IMR-90 (cell line): ENCODE measurements at regions of chr3 and their contacts with region 1.

Region 1: DNA sequence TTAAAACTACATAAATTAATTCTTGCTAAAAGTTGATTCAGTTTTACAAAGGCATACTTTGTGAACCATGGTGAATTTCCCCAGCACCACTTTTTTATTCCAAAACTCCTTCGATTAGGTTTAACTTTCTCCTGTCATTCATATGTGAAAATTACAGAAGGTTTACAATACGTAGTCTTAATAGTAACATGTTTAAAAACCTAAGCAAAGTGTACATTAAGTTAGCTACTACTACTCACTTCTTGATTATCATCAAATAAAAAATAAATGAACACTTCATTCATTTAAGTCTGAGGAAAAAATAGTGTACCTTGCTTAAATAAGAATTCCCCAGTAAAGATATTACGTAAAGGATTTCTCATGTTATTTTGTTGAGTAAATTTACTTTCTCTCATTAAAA is 38.6 kb downstream of the DCUN1D1 start:
- DNase-seq: no peak
- ATAC-seq: no peak
- H3K4me3 ChIP-seq: no peak overlapping the region
- H3K27ac ChIP-seq: no peak overlapping the region
- H3K4me1 ChIP-seq: no peaks in the 10 kb centered on the region
- H3K27me3 ChIP-seq: no peaks in the 10 kb centered on the region
- CTCF ChIP-seq: no peak
- POLR2A ChIP-seq: no peak
- RAD21 ChIP-seq: no peak

Region 2: DNA sequence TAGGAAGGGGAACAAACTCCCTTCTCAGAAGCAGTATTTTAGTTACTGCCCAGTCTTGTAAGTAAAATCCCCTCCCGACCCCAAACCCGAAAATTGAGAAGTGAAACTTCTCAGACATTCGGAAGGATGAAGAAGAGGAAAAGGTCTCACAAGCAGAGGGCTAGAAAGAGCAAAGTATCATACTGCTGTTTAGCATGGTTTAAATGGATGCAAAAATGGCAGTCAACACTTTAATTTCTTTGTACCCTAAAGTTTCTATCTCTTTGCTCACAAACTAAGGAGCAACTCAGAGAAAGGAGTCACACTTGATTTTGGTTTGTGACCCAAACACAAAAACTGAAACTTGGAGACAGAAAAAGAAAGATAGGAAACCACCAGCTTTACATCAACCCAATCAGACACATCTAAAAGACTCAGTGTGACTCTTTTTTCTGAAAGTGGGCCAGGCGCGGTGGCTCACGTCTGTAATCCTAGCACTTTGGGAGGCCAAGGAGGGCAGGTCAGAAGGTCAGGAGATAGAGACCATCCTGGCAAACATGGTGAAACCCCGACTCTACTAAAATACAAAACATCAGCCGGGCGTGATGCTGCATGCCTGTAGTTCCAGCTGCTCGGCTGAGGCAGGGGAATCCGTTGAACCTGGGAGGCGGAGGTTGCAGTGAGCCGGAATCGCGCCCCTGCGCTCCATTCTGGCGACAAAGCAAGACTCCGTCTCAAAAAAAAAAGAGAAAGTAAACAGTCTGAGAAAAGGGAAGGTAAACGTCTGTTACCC is 211.6 kb before region 1 on chr3:
- CTCF ChIA-PET with region 1: no interaction called
- POLR2A ChIA-PET with region 1: no interaction called
- dilution Hi-C with region 1: no loop called
- in situ Hi-C with region 1: no loop called
- intact Hi-C with region 1: no loop called
- DNase-seq: no peak
- ATAC-seq: no peak
- H3K4me3 ChIP-seq: no peak overlapping the region
- H3K27ac ChIP-seq: no peak overlapping the region
- H3K4me1 ChIP-seq: no peaks in the 10 kb centered on the region
- H3K27me3 ChIP-seq: peaks cover 9% of the 10 kb centered on the region
- CTCF ChIP-seq: no peak
- POLR2A ChIP-seq: no peak
- RAD21 ChIP-seq: no peak

Region 3: DNA sequence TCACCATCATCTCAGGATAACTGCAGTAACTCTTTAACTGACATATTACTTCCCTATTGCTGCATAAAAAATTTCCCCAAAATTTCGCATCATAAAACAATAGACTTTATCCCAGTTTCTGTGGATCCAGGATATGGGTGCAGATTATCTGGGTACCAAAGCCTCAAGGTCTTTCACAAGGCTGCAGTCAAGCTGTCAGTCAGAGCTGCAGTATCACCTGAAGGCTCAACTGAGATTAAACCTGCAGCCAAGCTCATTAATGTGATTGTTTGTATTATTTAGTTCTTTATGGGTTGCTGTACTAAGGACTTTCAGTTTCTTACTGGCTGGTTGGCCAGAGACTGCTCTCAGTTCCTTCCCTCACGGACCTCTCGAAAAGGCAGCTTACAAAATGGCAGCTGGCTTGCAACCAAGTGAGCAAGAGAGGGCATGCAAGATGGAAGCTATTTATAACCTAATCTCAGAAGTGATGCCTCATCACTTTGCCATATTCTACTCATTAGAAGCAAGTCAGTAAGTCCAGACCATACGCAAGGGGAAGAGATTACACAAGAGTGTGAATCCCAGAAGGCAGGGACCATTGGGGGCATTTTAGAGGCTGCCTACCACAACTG is 16.3 kb before region 1 on chr3:
- CTCF ChIA-PET with region 1: no interaction called
- POLR2A ChIA-PET with region 1: no interaction called
- dilution Hi-C with region 1: no loop called
- in situ Hi-C with region 1: no loop called
- intact Hi-C with region 1: loop called (anchors 1 kb)
- DNase-seq: peak; percentile 66
- ATAC-seq: peak; percentile 25; the same call in 1 of the 2 replicates
- H3K4me3 ChIP-seq: no peak overlapping the region
- H3K27ac ChIP-seq: no peak overlapping the region
- H3K4me1 ChIP-seq: no peaks in the 10 kb centered on the region
- H3K27me3 ChIP-seq: no peaks in the 10 kb centered on the region
- CTCF ChIP-seq: no peak
- POLR2A ChIP-seq: no peak
- RAD21 ChIP-seq: no peak